Dendritic cell treated with granulocyte-macrophage colony-stimulating factor and Interleukin-4, amounts not matched to agents 40 ng/mL and 50 ng/mL, for 4 days (primary cell): ENCODE measurements at regions of chr1 and their contacts with region 1.

Region 1: DNA sequence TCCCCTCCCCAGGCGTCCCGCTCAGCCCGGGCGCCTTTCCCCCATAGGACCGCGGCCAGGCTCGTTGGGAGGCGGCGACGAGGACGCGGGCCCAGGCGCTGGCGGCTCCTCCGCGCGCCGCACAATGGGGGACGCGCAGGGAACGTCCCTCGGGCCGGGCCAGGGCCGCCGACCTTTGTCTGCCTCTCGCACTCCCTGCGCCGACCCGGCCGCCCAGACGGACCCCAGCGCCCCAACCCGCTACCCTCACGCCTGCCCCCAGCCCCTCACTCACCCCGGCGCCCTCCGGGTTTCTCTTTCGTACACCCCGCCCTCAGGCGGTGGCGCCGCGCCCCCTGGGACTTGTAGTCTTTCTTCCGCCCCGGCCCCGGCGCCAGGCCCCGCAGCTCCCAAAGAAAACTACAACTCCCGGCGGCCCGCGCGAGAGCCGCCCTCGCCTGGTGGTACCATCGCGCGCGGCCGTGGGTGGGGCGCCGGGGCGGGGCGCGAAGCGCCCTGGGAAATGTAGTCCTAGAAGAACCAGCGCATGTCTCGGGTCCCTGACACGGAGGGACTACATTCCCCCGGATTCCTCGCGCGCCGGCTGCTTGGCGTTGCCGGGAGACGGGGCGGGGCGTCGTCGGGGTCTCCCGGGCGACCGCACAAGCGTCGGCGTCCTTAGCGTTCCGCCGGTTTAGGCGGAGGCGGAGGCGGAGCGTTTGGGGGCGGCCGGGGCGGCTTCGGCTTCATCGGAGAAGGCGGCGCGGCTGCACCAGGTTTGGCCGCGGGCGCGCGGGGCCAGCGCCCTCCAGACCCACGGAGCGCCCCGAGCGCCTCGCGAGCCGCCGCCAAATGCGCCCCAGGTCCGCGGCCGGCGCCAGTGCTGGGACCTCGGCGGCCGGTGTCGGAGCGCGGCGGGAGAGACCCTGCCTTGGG is at the start of gene C1orf159:
- H3K4me3 Mint-ChIP-seq: peak within 1 kb of the TSS; percentile 80
- H3K27ac Mint-ChIP-seq: peak within 1 kb of the TSS; percentile 74
- H3K4me1 Mint-ChIP-seq: peaks cover 18% of the 10 kb centered on the region
- H3K27me3 Mint-ChIP-seq: peaks cover 46% of the 10 kb centered on the region

Region 2: DNA sequence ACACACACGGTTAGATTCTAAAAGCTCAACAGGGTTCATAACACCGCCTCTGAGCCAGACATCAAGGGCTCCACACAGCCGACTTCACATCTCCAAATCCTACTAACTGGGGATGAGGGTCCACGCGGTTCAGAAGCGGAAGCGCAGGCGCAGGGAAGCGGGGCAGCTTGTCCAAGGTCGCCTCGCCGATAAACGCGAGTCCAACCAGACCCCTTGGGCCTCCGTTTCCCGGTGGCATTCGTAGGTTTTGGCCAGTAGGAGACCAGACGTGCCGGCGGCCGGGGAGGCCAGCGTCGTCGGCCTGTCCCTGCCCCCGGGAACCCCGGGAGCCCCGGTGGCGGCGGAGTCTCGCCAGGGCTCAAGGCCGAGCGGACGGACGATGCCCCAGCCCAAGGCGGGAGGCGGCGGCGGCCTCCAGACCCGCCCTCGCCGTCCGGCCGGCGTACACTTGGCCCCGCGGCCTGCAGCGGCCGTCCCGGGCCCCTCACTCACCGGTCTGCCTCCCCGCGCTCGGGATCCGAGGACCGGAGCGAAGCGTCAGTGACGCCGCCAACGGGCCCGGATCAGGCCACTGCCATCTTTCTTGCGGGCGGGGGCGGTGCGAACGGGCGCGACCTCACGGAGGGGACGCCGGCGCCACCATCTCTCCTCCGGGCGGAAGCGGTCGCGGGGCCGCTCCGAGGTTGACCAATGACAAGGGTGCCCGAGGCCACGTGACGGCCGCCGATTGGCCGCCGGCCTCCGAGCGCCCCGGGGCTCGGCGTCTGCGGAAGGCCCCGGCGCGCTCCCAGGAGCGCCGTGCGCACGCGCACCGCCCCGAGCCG is 115.6 kb after region 1 on chr1 and contains the start of gene SDF4:
- intact Hi-C with region 1: loop called (anchors 2 kb)
- H3K4me3 Mint-ChIP-seq: peak within 1 kb of the TSS; percentile 90
- H3K27ac Mint-ChIP-seq: peak within 1 kb of the TSS; percentile 91
- H3K4me1 Mint-ChIP-seq: peaks cover 37% of the 10 kb centered on the region
- H3K27me3 Mint-ChIP-seq: no peaks in the 10 kb centered on the region